ENCODE measurements at regions of chr14 and their contacts with region 1.

Region 1: DNA sequence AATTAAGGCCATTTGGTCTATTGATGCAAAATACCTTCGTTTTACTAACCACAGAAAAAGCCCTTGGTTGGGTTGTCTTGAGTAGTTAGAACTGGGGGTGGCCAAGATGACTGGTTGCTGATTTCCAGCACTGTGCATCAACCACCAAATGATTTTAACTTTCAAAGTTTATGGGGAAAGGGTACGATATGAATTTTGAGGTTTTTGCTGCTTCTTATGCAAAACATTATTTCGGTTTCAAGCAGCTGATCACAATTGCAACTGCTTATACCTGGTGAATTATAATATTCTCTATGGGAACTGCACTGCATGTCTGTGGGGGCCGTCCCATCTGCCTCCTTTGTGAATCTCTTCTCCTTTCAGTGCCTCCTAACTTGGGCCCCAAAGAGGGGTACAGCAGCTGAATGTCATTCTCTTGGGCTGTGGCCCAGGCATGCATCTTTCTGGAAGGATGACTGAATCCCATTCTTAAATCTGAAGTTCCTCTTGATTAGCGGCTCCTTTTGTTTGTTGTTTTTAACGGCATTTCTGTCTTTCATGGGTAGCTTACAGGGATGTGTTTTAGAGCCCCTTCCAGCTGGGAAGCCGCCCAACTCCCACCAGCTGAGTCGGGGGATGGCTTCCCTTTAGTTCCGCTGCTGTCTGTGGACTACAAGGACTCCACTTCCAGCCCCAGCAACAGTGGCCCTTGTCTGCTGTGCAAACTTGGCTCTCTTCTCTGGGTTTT is 479.8 kb downstream of the ZFP36L1 start:
- DNase-seq: no peak
- ATAC-seq: peak; percentile 84
- H3K4me3 Mint-ChIP-seq: peak overlapping the region; percentile 62
- H3K27ac Mint-ChIP-seq: peak overlapping the region; percentile 94
- H3K4me1 Mint-ChIP-seq: peaks cover 91% of the 10 kb centered on the region
- H3K27me3 Mint-ChIP-seq: no peaks in the 10 kb centered on the region
- CTCF ChIP-seq: no peak

Region 2: GRCh38 chr14:68292441-68293215 is 20.4 kb before region 1 on chr14:
- CTCF ChIA-PET with region 1: interaction called, 4 read pairs
- POLR2A ChIA-PET with region 1: interaction called, 251 read pairs
- intact Hi-C with region 1: loop called (anchors 1 kb)
- DNase-seq: no peak
- ATAC-seq: peak; percentile 35
- H3K4me3 Mint-ChIP-seq: peak overlapping the region; percentile 59
- H3K27ac Mint-ChIP-seq: peak overlapping the region; percentile 96
- H3K4me1 Mint-ChIP-seq: peaks cover 77% of the 10 kb centered on the region
- H3K27me3 Mint-ChIP-seq: no peaks in the 10 kb centered on the region
- CTCF ChIP-seq: no peak

Region 3: GRCh38 chr14:68322940-68323620 is 10.0 kb after region 1 on chr14:
- CTCF ChIA-PET with region 1: no interaction called
- POLR2A ChIA-PET with region 1: interaction called, 27 read pairs
- intact Hi-C with region 1: loop called (anchors 1 kb)
- DNase-seq: no peak
- ATAC-seq: no peak
- H3K4me3 Mint-ChIP-seq: no peak overlapping the region
- H3K27ac Mint-ChIP-seq: no peak overlapping the region
- H3K4me1 Mint-ChIP-seq: peaks cover 74% of the 10 kb centered on the region
- H3K27me3 Mint-ChIP-seq: no peaks in the 10 kb centered on the region
- CTCF ChIP-seq: no peak

Region 4: GRCh38 chr14:68328509-68328908 is 15.5 kb after region 1 on chr14:
- CTCF ChIA-PET with region 1: no interaction called
- POLR2A ChIA-PET with region 1: interaction called, 27 read pairs
- intact Hi-C with region 1: loop called (anchors 1 kb)
- DNase-seq: no peak
- ATAC-seq: no peak
- H3K4me3 Mint-ChIP-seq: no peak overlapping the region
- H3K27ac Mint-ChIP-seq: peak overlapping the region; percentile 13
- H3K4me1 Mint-ChIP-seq: peaks cover 63% of the 10 kb centered on the region
- H3K27me3 Mint-ChIP-seq: no peaks in the 10 kb centered on the region
- CTCF ChIP-seq: no peak

Region 5: GRCh38 chr14:68377459-68377858 is 64.4 kb after region 1 on chr14:
- CTCF ChIA-PET with region 1: no interaction called
- POLR2A ChIA-PET with region 1: interaction called, 25 read pairs
- intact Hi-C with region 1: loop called (anchors 2 kb)
- DNase-seq: no peak
- ATAC-seq: peak; percentile 43
- H3K4me3 Mint-ChIP-seq: peak overlapping the region; percentile 50
- H3K27ac Mint-ChIP-seq: peak overlapping the region; percentile 83
- H3K4me1 Mint-ChIP-seq: peaks cover 69% of the 10 kb centered on the region
- H3K27me3 Mint-ChIP-seq: no peaks in the 10 kb centered on the region
- CTCF ChIP-seq: no peak

Measured in activated B cell treated with CpG ODN at 0.5 μM for 24 hours (primary cell).